OCI-LY7 (cell line): ENCODE measurements at regions of chr6 and their contacts with region 1.

Region 1: GRCh38 chr6:28863604-28864320 is 60.0 kb downstream of the TRIM27 start:
- DNase-seq: peak; percentile 79
- H3K4me3 ChIP-seq: peak overlapping the region; percentile 80
- H3K27ac ChIP-seq: peak overlapping the region; percentile 37
- H3K4me1 ChIP-seq: peaks cover 37% of the 10 kb centered on the region
- CTCF ChIP-seq: no peak

Region 2: DNA sequence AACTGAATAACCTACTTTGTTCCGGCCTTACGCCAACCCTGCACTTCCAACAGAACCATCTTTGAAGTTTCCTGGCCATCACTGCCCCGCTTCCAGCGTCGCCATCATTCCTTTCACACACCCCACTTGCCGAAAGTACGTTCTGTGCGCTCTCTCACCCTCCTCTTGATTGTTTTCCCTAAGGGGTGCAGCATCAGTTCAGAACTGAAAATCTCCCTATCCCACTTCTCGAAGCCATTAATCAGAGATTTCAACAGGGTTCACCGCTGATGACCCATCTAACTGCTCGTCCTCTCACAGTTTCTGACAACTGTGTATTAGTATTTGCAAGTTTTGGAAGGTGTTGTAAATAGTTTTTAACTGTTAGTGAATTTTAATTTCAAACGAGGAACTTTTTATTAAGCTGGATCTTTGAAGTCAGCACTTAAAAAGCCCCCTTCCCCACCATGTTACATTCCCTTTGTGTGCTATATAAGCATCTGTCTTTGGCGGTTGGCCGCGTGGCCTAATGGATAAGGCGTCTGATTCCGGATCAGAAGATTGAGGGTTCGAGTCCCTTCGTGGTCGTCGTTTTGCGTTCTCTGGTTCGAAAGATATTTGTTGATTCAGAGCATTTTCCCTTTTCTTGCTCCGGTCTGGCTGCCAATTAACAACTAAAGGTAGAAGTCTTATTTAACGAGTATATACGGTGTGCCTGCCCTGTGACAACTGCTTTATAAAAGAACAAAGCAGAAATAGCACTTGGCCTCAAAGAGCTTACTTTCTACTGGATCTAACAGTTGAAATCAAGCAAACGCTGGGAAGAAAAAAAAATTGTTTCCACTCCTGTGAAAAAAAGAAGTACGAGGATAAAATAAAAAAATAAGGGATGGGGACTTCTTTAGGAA is 17.4 kb after region 1 on chr6:
- CTCF ChIA-PET with region 1: interaction called, 3 read pairs
- POLR2A ChIA-PET with region 1: interaction called, 38 read pairs
- intact Hi-C with region 1: no loop called
- DNase-seq: peak; percentile 72
- H3K4me3 ChIP-seq: peak overlapping the region; percentile 50
- H3K27ac ChIP-seq: peak overlapping the region; percentile 61
- H3K4me1 ChIP-seq: peaks cover 64% of the 10 kb centered on the region
- CTCF ChIP-seq: no peak

Region 3: DNA sequence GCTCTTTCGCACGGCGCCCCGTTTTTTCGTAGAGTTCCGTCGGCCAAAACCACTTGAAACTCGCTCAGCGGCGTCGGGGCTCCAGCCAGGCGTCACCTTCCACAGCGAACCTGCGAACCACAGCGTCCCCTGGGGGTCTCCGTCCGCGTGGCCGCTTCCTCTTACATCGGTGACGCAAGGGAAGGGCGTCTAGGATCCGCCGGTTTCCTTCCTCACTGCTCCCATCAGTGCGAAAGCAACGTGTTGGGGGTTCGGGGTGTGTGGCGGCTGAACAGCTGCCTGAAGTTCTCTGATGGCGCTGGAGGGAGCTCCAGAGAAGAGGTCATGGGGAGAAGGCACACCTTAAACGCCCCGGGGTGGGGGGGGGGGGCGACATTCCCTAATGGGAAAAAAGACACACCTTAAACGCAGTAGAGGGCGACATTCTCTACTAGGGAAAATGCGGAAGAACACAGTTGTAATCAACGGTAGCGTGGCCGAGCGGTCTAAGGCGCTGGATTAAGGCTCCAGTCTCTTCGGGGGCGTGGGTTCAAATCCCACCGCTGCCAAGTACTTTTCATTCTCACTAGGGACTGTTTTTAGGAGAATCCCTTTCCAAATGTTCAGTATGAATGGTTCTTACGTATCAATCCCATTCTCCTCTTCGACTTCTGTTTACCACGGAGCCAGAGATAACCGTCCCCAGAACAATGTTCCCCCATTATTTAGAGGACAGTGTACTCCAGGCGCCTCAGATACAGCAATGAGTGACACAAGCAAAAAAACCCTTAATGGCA is 125.0 kb after region 1 on chr6:
- CTCF ChIA-PET with region 1: no interaction called
- POLR2A ChIA-PET with region 1: no interaction called
- intact Hi-C with region 1: no loop called
- DNase-seq: no peak
- H3K4me3 ChIP-seq: no peak overlapping the region
- H3K27ac ChIP-seq: no peak overlapping the region
- H3K4me1 ChIP-seq: no peaks in the 10 kb centered on the region
- CTCF ChIP-seq: no peak

Region 4: GRCh38 chr6:29200767-29201662 is 337.3 kb after region 1 on chr6:
- CTCF ChIA-PET with region 1: no interaction called
- POLR2A ChIA-PET with region 1: no interaction called
- intact Hi-C with region 1: no loop called
- DNase-seq: no peak
- H3K4me3 ChIP-seq: no peak overlapping the region
- H3K27ac ChIP-seq: no peak overlapping the region
- H3K4me1 ChIP-seq: no peaks in the 10 kb centered on the region
- CTCF ChIP-seq: no peak